ENCODE measurements at regions of chr22 and their contacts with region 1.

Region 1: GRCh38 chr22:37686002-37686982 is at the start of gene NOL12:
- DNase-seq: peak; percentile 62 to 84 (median 74)
- H3K4me3 ChIP-seq: peak within 1 kb of the TSS; percentile 88
- H3K4me3 Mint-ChIP-seq: peak within 1 kb of the TSS; percentile 83 to 97 (median 94)
- H3K27ac ChIP-seq: peak within 1 kb of the TSS; percentile 83
- H3K27ac Mint-ChIP-seq: peak within 1 kb of the TSS; percentile 32 to 100 (median 96)
- H3K4me1 ChIP-seq: peaks cover 21% of the 10 kb centered on the region
- H3K4me1 Mint-ChIP-seq: peaks cover 26 to 38% (median 34%) of the 10 kb centered on the region in 3 donors
- H3K27me3 ChIP-seq: no peaks in the 10 kb centered on the region
- H3K27me3 Mint-ChIP-seq: peaks cover 0 to 1% of the 10 kb centered on the region in 2 donors
- total RNA-seq, gene NOL12: 53.6 to 57.2 TPM

Region 2: GRCh38 chr22:37658133-37659065 is 27.9 kb before region 1 on chr22 and contains the start of gene PDXP:
- CTCF ChIA-PET with region 1: interaction called, 83 read pairs
- POLR2A ChIA-PET with region 1: interaction called, 12 read pairs
- DNase-seq: peak; percentile 96 to 98 (median 97)
- H3K4me3 ChIP-seq: peak within 1 kb of the TSS; percentile 69
- H3K4me3 Mint-ChIP-seq: peak within 1 kb of the TSS; percentile 85 to 91 (median 88)
- H3K27ac ChIP-seq: peak within 1 kb of the TSS; percentile 52
- H3K27ac Mint-ChIP-seq: peak within 1 kb of the TSS; percentile 66 to 97 (median 94)
- H3K4me1 ChIP-seq: peaks cover 31% of the 10 kb centered on the region
- H3K4me1 Mint-ChIP-seq: peaks cover 34 to 44% (median 36%) of the 10 kb centered on the region in 3 donors
- H3K27me3 ChIP-seq: no peaks in the 10 kb centered on the region
- H3K27me3 Mint-ChIP-seq: no peaks in the 10 kb centered on the region
- total RNA-seq, gene PDXP: 36.0 to 37.8 TPM

Region 3: DNA sequence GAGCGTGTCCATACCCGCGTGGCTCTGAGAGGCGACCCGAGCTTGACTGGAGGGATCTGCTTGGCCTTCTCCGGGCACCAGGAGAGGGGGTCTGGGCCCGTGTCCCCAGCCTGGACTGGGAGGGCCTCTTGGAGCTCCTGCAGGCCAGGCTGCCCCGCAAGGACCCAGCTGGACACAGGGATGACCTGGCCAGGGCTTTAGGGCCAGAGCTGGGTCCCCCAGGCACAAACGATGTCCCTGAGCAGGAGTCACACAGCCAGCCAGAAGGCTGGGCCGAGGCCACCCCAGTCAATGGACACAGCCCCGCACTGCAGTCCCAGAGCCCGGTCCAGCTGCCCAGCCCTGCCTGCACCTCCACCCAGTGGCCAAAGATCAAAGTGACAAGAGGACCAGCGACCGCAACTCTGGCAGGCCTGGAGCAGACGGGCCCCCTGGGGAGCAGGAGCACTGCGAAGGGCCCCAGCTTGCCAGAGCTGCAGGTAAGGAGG is 48.7 kb after region 1 on chr22:
- CTCF ChIA-PET with region 1: no interaction called
- POLR2A ChIA-PET with region 1: no interaction called
- DNase-seq: no peak
- H3K4me3 ChIP-seq: no peak overlapping the region
- H3K4me3 Mint-ChIP-seq: no peak overlapping the region
- H3K27ac ChIP-seq: no peak overlapping the region
- H3K27ac Mint-ChIP-seq: no peak overlapping the region
- H3K4me1 ChIP-seq: no peaks in the 10 kb centered on the region
- H3K4me1 Mint-ChIP-seq: no peaks in the 10 kb centered on the region
- H3K27me3 ChIP-seq: no peaks in the 10 kb centered on the region
- H3K27me3 Mint-ChIP-seq: peaks cover 4 to 9% of the 10 kb centered on the region in 2 donors